ENCODE measurements at regions of chr19 and their contacts with region 1.

Region 1: DNA sequence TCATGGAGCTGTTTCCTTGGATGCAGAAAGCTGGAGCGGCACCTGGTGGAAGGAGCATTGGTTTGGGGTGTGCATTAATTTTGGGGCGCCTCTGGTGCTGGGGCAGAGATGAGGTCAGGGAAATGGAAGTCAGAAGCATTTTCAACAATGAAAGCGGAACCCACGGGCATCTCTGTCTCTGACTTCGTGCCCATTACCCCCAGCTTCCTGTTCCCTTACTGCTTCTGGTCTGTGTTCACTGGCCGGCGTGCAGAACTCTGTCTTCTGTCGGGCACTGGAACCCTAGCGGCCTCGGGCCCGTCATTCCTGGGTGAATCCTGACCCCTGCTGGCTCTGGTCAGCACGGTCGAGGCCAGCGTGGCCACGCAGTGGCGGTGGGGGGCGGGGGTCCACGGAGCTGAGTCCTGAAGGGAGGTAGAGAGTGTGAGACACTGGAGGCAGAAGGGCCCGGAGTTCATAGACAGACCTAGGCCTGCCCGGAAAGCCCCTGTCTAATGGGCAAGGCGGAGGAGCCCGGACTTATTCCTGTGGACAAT is 7.9 kb upstream of the LINGO3 start:
- DNase-seq: no peak
- ATAC-seq: peak; percentile 93
- H3K4me3 ChIP-seq: 0 out of 4 replicates have a peak overlapping the region, but pooled peaks of 1 of the 2 experiments have one; percentile 6
- H3K27ac ChIP-seq: no peak overlapping the region
- H3K4me1 ChIP-seq: no peaks in the 10 kb centered on the region; the same call in 1 of the 2 replicates
- H3K27me3 ChIP-seq: no peaks in the 10 kb centered on the region
- CTCF ChIP-seq: peak; percentile 81

Region 2: GRCh38 chr19:1725100-1726064 is 590.5 kb before region 1 on chr19:
- CTCF ChIA-PET with region 1: no interaction called
- POLR2A ChIA-PET with region 1: no interaction called
- in situ Hi-C with region 1: no loop called
- intact Hi-C with region 1: no loop called
- DNase-seq: no peak
- ATAC-seq: peak; percentile 95
- H3K4me3 ChIP-seq: peak overlapping the region; percentile 53 to 56
- H3K27ac ChIP-seq: peak overlapping the region; percentile 77
- H3K4me1 ChIP-seq: peaks cover 3% of the 10 kb centered on the region; the same call in 1 of the 2 replicates
- H3K27me3 ChIP-seq: no peaks in the 10 kb centered on the region
- CTCF ChIP-seq: no peak

Region 3: DNA sequence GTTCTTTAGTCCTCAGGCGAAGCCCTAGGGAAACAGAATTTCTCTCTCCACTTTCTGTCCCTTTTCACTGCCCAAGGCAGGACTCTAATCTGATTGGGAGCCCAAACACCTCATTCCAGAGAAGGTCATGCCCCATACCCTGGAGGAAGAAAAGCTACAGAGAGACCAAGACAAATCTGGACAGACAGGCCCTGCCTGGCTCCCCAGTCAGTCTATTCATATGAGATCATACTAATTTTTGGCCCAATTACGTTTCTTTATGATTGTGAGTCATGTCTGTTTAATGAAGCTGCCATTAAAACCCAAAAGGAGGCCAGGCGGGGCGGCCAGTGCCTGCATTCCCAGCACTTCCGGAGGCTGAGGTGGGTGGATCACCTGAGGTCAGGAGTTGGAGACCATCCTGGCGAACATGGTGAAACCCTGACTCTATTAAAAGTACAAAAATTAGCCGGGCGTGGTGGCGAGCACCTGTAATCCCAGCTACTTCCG is 161.3 kb before region 1 on chr19:
- CTCF ChIA-PET with region 1: interaction called, 5 read pairs
- POLR2A ChIA-PET with region 1: no interaction called
- in situ Hi-C with region 1: no loop called
- intact Hi-C with region 1: loop called (anchors 5 kb)
- DNase-seq: no peak
- ATAC-seq: no peak
- H3K4me3 ChIP-seq: no peak overlapping the region
- H3K27ac ChIP-seq: no peak overlapping the region
- H3K4me1 ChIP-seq: peaks cover under 1% of the 10 kb centered on the region; the same call in 1 of the 2 replicates
- H3K27me3 ChIP-seq: no peaks in the 10 kb centered on the region
- CTCF ChIP-seq: no peak

Region 4: DNA sequence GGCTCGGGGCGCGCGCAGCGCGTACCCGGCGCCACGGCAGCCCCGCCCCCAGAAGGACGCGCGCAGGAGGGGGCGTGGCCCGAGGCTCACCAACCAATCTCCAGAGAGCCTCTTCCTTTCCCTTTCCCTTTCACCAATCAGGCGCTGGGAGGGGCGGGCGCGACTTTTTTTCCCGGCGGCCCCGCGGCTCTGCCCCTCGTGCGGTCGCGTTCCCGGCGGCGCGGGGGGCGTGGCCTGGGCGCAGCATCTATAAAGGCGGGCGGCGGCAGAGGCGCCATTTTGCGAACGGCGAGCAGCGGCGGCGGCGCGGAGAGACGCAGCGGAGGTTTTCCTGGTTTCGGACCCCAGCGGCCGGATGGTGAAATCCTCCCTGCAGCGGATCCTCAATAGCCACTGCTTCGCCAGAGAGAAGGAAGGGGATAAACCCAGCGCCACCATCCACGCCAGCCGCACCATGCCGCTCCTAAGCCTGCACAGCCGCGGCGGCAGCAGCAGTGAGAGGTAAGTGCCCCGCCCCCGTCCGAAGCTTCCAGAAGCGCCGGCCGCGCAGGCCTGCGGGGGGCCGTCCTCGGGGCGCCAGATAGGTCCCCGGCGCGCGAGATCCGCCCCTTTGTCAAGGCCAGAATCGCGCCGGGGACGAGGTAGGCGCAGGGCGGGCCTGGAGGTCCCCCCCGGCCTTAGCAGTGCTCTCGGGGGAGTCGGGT is 46.5 kb before region 1 on chr19:
- CTCF ChIA-PET with region 1: no interaction called
- POLR2A ChIA-PET with region 1: no interaction called
- in situ Hi-C with region 1: no loop called
- intact Hi-C with region 1: no loop called
- DNase-seq: no peak
- ATAC-seq: peak; percentile 84
- H3K4me3 ChIP-seq: peak overlapping the region; percentile 71 to 89
- H3K27ac ChIP-seq: peak overlapping the region; percentile 93
- H3K4me1 ChIP-seq: peaks cover 18% of the 10 kb centered on the region
- H3K27me3 ChIP-seq: no peaks in the 10 kb centered on the region
- CTCF ChIP-seq: no peak

Region 5: DNA sequence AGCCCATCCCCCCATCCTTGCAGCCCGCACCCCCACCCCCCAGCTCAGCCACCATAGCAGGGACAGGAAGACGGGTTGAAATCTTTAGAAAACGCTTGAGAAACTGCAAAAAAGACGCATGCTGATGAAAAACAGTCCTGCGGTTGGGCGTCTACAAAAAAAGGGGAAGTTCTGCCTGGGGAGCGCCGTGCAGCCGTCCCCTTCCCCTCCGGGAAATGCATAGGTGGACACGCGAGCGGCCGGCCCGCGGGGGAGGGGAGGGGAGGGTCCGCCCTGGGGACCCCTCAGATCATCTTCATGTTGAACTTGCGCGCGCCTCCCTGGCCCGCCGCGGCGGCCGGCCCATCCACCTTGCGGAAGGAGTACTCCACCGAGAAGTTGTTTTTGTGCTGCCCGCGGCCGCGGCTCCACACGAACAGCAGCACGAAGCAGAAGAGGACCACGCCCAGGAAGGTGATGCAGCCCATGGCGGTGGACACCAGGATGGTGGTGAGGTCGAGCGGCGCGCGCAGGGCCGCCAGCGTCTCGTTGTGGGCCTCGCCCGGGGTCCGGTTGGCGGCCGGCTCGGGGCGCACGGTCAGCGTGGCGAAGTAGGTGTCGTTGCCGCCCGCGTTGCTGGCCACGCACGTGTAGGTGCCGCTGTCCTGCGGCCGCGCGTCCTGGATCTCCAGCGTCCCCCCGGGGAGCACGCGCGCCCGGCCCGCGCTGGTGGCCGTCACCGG is 26.0 kb before region 1 on chr19:
- CTCF ChIA-PET with region 1: no interaction called
- POLR2A ChIA-PET with region 1: no interaction called
- in situ Hi-C with region 1: no loop called
- intact Hi-C with region 1: no loop called
- DNase-seq: no peak
- ATAC-seq: no peak
- H3K4me3 ChIP-seq: no peak overlapping the region
- H3K27ac ChIP-seq: no peak overlapping the region
- H3K4me1 ChIP-seq: no peaks in the 10 kb centered on the region
- H3K27me3 ChIP-seq: no peaks in the 10 kb centered on the region
- CTCF ChIP-seq: no peak

Measured in Panc1 (cell line).